Posterior vena cava (tissue), 2 donors: ENCODE measurements at regions of chr12 and their contacts with region 1.

Region 1: GRCh38 chr12:120702637-120703036 is 7.6 kb upstream of the UNC119B start:
- DNase-seq: no peak

Region 2: GRCh38 chr12:120666571-120667390 is 35.9 kb before region 1 on chr12:
- intact Hi-C with region 1: loop called in 1 of 2 experiments (anchors 1 kb)
- DNase-seq: no peak

Region 3: GRCh38 chr12:120775862-120776552 is 73.4 kb after region 1 on chr12:
- intact Hi-C with region 1: no loop called
- DNase-seq: no peak